AG04449 (cell line): ENCODE measurements at regions of chr6 and their contacts with region 1.

Region 1: GRCh38 chr6:41683510-41684310 is 45.4 kb downstream of the MDFI start:
- DNase-seq: no peak
- H3K4me3 ChIP-seq: peak overlapping the region; percentile 38
- CTCF ChIP-seq: peak; percentile 97

Region 2: GRCh38 chr6:41111036-41111435 is 572.7 kb before region 1 on chr6:
- CTCF ChIA-PET with region 1: no interaction called
- POLR2A ChIA-PET with region 1: no interaction called
- DNase-seq: no peak
- H3K4me3 ChIP-seq: no peak overlapping the region
- CTCF ChIP-seq: no peak

Region 3: GRCh38 chr6:41373919-41374617 is 309.6 kb before region 1 on chr6:
- CTCF ChIA-PET with region 1: interaction called, 414 read pairs
- POLR2A ChIA-PET with region 1: no interaction called
- DNase-seq: no peak
- H3K4me3 ChIP-seq: no peak overlapping the region
- CTCF ChIP-seq: no peak

Region 4: GRCh38 chr6:41463062-41463930 is 220.4 kb before region 1 on chr6:
- CTCF ChIA-PET with region 1: interaction called, 18 read pairs
- POLR2A ChIA-PET with region 1: no interaction called
- DNase-seq: no peak
- H3K4me3 ChIP-seq: no peak overlapping the region
- CTCF ChIP-seq: peak; percentile 59

Region 5: GRCh38 chr6:41608443-41609151 is 75.1 kb before region 1 on chr6:
- CTCF ChIA-PET with region 1: interaction called, 179 read pairs
- POLR2A ChIA-PET with region 1: interaction called, 5 read pairs
- DNase-seq: no peak
- H3K4me3 ChIP-seq: no peak overlapping the region
- CTCF ChIP-seq: no peak

Region 6: GRCh38 chr6:41713650-41714291 is 30.1 kb after region 1 on chr6:
- CTCF ChIA-PET with region 1: interaction called, 15 read pairs
- POLR2A ChIA-PET with region 1: no interaction called
- DNase-seq: no peak
- H3K4me3 ChIP-seq: no peak overlapping the region
- CTCF ChIP-seq: no peak

Region 7: DNA sequence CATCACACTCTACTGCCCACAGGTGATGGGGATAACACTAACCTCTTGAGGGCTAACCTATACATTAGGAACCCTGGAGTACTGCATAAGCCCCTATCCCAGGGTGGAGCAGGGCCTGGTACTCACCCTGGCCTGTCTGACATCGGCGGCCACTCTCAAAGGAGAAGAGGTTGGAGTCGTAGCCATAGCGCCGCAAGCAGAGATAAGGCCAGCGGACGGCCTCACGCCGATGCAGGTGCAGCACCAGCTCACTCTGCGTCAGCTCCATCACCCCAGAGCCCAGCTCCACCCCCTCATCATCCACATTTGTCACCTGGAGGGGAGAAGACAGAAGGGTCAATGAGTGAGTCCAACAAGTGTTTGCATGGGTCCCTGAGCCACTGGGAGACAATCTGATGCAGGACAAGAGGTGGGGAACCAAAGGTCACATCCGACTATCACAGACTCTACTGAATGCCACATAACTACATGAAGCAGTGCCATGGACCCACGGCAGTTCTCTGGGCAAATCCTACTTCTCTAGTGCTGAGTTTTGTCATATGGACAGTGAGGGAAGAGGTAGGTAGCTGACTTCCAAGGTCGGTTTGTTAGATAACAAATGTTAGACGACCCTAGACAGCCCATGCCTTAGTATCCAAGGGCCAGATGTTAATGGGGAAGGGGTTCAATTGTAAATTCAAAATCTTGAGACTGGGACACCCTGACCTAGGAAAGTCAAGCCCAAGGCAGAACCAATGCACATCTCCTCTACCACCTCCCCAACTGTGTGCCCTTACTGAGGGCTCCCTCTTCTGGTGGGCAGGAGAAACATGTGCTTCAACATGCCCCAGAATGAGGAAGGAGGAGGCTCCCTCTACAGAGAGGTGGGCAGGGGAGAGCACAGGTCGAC is 91.8 kb after region 1 on chr6:
- CTCF ChIA-PET with region 1: interaction called, 13 read pairs
- POLR2A ChIA-PET with region 1: no interaction called
- DNase-seq: no peak
- H3K4me3 ChIP-seq: no peak overlapping the region
- CTCF ChIP-seq: peak; percentile 89